ENCODE measurements at regions of chr2 and their contacts with region 1.

Region 1: GRCh38 chr2:3585261-3586109 is 9.4 kb upstream of the COLEC11 start:
- DNase-seq: peak in 1 of 2 donors; percentile 82
- H3K4me3 ChIP-seq: no peak overlapping the region
- CTCF ChIP-seq: no peak
- POLR2A ChIP-seq: no peak

Region 2: GRCh38 chr2:3523551-3524041 is 61.9 kb before region 1 on chr2:
- intact Hi-C with region 1: no loop called
- DNase-seq: no peak
- H3K4me3 ChIP-seq: no peak overlapping the region
- CTCF ChIP-seq: no peak
- POLR2A ChIP-seq: no peak

Region 3: GRCh38 chr2:3558205-3559014 is 27.1 kb before region 1 on chr2 and contains the start of gene RNASEH1:
- intact Hi-C with region 1: loop called (anchors 1 kb)
- DNase-seq: peak; percentile 95 to 99
- H3K4me3 ChIP-seq: peak within 1 kb of the TSS; percentile 99
- CTCF ChIP-seq: no peak
- POLR2A ChIP-seq: peak in 1 of 2 donors; percentile 69
- total RNA-seq, gene RNASEH1: 10.7 to 17.1 (median 14.4) TPM